ENCODE measurements at regions of chr7 and their contacts with region 1.

Region 1: DNA sequence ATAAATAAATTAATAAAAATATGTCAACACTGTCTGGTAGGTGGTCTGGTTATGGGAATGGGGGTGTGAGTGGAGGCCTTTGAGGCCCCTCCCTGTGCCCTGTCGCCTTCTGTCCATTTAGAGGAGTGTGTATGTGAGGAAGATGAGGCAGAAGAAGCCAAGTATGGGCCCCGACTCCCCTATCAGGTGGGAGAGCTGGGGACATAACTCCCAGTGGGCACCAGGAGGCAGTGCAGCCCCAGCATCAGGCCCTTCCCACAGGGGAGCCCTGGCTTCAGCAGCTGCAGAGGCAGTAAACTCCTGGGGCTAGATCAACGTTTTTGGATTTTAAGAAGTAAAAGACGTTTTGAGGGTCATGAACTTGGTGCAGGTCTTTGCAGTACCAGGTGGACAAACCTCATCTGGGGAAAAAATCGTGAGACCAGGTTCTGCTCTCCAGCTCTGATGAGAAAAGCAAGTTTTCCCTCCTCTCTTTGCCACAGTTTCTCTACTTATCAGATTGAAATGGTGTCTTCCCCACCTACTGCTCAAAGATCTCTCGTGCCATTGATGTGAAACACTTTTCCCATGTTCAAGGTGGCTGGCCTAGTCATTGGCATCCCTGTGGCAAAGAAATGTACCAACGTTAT is 167.8 kb upstream of the EEPD1 start:
- DNase-seq: peak; percentile 54 to 80
- H3K4me3 ChIP-seq: no peak overlapping the region
- H3K27ac ChIP-seq: no peak overlapping the region
- H3K4me1 ChIP-seq: no peaks in the 10 kb centered on the region
- H3K27me3 ChIP-seq: no peaks in the 10 kb centered on the region
- CTCF ChIP-seq: peak; percentile 92 to 96 (median 94)
- EP300 ChIP-seq: no peak
- POLR2A ChIP-seq: no peak
- RAD21 ChIP-seq: peak; percentile 99

Region 2: DNA sequence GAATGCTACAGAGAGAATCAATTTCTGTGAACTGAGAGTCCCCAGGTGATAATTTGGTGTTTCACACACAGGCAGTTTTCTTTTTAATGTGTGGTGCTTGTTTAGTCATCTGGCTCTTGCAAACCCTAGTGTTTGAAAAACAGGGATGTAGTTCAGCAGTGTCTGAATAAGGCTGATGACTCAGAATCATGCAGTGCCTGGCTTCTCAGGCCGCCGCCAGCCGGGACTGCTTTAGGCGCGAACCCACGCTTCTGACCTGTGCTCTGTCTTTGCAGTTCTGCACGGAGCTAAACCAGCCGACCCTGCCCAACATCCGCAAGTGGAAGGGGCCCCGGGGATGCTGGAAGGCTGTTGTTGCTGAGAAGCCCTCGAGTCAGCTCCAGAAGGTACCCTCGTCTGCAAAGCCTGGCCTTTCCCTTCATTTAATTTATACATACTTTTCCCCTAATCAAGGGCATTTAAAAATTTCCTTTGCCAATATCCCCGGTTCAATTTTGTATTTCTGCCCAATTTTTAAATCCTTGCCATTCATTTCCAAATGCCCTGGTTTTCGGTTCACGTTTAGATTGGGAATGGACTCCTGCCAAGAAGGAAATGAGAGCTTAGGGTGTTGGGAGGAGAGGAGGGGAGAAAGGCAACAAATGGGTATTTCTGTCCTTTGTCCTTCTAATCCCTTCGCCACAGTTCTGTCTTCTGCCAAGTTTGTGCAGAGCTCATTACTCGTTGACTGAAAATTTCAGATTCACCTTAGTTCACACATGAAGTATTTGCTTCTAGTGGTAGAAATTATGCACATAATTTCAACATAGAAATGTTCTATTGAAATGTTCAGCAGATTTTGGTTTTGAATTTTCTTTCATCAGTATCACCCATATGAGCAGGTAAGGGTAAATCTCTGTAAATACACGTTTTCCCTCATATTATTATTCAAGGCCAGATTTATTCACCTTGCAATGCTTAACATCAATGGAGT is 295.9 kb after region 1 on chr7:
- CTCF ChIA-PET with region 1: interaction called, 15 read pairs
- POLR2A ChIA-PET with region 1: interaction called, 3 read pairs
- DNase-seq: no peak
- H3K4me3 ChIP-seq: peak overlapping the region in 1 of 4 experiments; percentile 29; a peak in 2 of 8 replicates
- H3K27ac ChIP-seq: peak overlapping the region; percentile 77; the same call in 1 of the 2 replicates
- H3K4me1 ChIP-seq: peaks cover 27 to 63% (median 44%) of the 10 kb centered on the region in 4 experiments
- H3K27me3 ChIP-seq: no peaks in the 10 kb centered on the region
- CTCF ChIP-seq: no peak
- EP300 ChIP-seq: no peak
- POLR2A ChIP-seq: 0 out of 3 replicates have a peak, but pooled peaks of 1 of the 2 experiments have one; percentile 41
- RAD21 ChIP-seq: no peak

Region 3: GRCh38 chr7:36303202-36304098 is 318.2 kb after region 1 on chr7:
- CTCF ChIA-PET with region 1: interaction called, 11 read pairs
- POLR2A ChIA-PET with region 1: no interaction called
- DNase-seq: no peak
- H3K4me3 ChIP-seq: no peak overlapping the region
- H3K27ac ChIP-seq: no peak overlapping the region
- H3K4me1 ChIP-seq: peaks cover 0 to 6% (median 0%) of the 10 kb centered on the region in 4 experiments; a peak in 2 of 7 replicates
- H3K27me3 ChIP-seq: no peaks in the 10 kb centered on the region
- CTCF ChIP-seq: no peak
- EP300 ChIP-seq: no peak
- POLR2A ChIP-seq: no peak
- RAD21 ChIP-seq: no peak

Region 4: DNA sequence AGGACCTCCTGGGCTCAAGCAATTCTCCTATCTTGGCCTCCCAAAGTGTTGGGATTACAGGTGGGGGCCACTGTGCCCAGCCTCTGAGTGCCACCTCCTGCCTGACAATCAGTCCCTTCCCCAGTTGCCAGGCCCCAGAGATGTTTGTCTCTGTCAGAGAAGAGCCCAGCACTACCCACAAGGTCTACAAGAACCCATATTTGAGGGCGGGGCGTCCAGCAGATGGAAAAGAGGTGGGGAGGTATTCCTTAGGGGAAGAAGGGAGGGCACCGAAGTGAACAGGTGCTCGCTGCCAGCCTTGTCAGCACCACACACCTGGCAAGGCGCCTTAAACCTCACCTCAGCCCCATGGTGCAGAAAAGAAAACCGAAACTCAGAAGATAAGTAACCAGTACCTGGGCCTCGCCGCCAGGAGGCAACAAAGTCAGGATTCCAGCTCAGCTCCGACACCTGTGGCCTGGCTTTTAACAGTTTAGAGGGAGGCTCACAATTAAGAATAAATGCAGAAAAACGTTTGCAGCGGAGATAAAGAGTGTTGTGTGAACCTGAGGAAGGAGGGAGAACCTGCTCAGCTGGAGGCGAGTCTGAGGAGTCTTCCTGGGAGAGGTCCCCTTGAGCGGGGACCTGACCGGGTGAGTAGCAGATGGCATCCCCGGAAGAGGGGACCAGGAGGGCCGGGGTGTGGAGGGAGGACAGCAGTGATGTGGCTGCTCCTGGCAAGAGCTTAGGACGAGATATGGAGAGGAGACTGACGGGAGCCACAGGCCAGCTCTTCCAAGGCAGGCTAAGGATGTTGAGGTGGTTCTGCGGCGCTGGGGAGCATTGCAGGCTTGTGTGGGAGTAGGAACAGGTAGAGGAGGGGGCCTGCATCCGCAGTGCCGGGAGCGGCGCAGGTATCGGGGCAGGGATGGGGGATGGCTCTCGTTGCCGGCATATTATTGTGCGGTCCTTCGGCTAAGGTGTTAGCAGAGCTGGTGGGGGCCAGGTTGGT is 327.4 kb after region 1 on chr7:
- CTCF ChIA-PET with region 1: interaction called, 80 read pairs
- POLR2A ChIA-PET with region 1: no interaction called
- DNase-seq: peak in 1 of 2 experiments; percentile 65
- H3K4me3 ChIP-seq: no peak overlapping the region
- H3K27ac ChIP-seq: no peak overlapping the region
- H3K4me1 ChIP-seq: peaks cover 0 to 6% (median 0%) of the 10 kb centered on the region in 4 experiments; a peak in 3 of 7 replicates
- H3K27me3 ChIP-seq: no peaks in the 10 kb centered on the region
- CTCF ChIP-seq: peak; percentile 61 to 71 (median 69)
- EP300 ChIP-seq: no peak
- POLR2A ChIP-seq: no peak
- RAD21 ChIP-seq: peak; percentile 50 to 59

Measured in H1 (cell line).